ENCODE measurements at regions of chr11 and their contacts with region 1.

Region 1: GRCh38 chr11:15006139-15006759 is 34.1 kb upstream of the CALCA start:
- DNase-seq: no peak
- H3K4me3 Mint-ChIP-seq: no peak overlapping the region
- H3K27ac Mint-ChIP-seq: no peak overlapping the region
- H3K4me1 Mint-ChIP-seq: no peaks in the 10 kb centered on the region
- H3K27me3 Mint-ChIP-seq: peaks cover 58% of the 10 kb centered on the region

Region 2: DNA sequence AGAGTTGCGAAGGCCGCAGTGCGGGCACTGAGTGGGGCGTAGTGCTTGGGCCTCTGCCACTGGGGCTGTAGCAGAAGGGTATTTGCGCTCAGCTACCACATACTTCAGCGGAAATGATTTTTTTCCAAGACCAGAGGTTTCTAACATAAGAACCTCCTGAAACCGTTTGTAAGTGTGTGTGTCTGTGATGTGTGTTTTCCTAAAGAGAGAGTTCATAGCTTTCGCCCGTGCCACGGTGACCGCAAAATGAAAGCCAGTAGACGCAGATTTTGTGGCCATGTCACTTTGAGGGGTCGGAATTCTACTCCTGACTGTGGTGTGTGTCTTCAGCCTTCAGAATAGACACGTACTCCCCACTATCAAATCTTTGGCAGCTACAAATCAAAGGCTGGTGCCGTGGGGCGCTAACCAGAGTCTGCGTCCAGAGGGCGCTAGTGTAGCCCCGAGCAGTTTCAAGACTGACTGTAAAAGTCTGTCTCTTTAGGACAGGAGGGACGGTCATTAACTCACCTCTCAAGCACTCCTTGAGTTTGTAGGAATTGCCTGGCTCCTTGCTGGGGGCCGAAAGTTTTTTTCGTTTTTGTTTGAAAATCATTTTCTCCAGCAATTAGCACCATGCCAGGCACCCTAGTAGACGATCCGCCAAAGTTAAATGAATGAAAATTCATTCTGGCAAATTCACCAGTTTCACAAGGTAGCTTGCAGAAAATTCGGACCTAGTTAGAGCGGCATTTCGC is 31.6 kb before region 1 on chr11:
- intact Hi-C with region 1: loop called (anchors 2 kb)
- DNase-seq: peak; percentile 53
- H3K4me3 Mint-ChIP-seq: peak overlapping the region; percentile 33
- H3K27ac Mint-ChIP-seq: no peak overlapping the region
- H3K4me1 Mint-ChIP-seq: peaks cover 21% of the 10 kb centered on the region
- H3K27me3 Mint-ChIP-seq: peaks cover 75% of the 10 kb centered on the region

Region 3: GRCh38 chr11:15027011-15027410 is 20.8 kb after region 1 on chr11:
- intact Hi-C with region 1: no loop called
- DNase-seq: no peak
- H3K4me3 Mint-ChIP-seq: no peak overlapping the region
- H3K27ac Mint-ChIP-seq: no peak overlapping the region
- H3K4me1 Mint-ChIP-seq: no peaks in the 10 kb centered on the region
- H3K27me3 Mint-ChIP-seq: peaks cover 15% of the 10 kb centered on the region